Ascending aorta (tissue), 2 donors: ENCODE measurements at regions of chr1 and their contacts with region 1.

Region 1: GRCh38 chr1:208245185-208245705 is 1.1 kb upstream of the PLXNA2 start:
- DNase-seq: peak; percentile 62 to 98
- H3K4me3 ChIP-seq: peak overlapping the region; percentile 75 to 96
- H3K27ac ChIP-seq: peak overlapping the region; percentile 91 to 95
- H3K4me1 ChIP-seq: peaks cover 4 to 24% of the 10 kb centered on the region in 2 donors
- H3K27me3 ChIP-seq: no peaks in the 10 kb centered on the region
- CTCF ChIP-seq: peak; percentile 67 to 91 (median 83)

Region 2: DNA sequence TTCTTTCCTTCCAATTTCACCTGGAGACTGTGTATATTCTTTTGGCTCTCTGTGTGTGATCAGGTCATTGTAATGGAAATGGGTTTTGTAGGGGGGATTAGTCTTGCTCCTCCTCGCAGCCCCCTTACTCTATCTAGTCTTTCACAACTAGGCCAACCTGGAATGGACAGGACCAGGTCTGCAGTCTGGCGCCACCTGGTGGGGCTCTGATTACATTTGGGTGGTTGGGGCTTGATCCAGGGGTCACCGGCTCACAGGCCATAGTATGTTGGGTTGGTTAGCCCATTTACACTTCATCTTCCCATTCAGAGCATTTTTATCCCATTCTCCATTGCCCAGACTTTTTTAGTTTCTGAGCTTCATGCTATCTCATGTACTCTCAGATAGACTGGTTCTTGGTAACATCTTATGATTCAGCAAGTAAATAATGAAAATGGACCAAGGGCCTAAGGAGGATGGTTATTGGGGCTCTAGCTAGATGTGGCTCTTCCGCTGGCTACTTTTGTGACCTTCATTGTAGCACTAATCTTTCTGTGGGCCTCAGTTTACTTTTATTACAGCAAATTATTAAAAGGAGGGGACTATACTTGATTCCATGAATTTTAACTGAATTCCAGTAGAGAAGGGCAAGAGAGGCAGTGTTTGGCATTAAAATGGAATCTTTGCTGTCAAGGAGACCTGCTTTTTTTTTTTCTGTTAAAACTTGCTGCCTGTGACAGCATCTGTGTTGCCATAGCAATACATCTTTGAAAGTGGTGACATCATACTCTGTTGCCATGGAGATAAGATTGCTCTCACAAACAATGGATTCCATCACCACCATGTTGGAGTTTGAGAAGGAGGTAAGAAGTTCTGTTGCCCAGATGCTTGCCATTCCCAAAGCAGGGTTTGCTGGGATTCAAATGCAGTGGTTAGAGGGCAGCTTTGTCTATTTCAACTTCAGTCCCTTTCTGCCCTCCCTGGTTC is 151.2 kb before region 1 on chr1:
- intact Hi-C with region 1: loop called (anchors 5 kb)
- DNase-seq: peak in 1 of 2 donors; percentile 79
- H3K4me3 ChIP-seq: no peak overlapping the region
- H3K27ac ChIP-seq: peak overlapping the region in 1 of 2 donors; percentile 44
- H3K4me1 ChIP-seq: peaks cover 0 to 12% of the 10 kb centered on the region in 2 donors
- H3K27me3 ChIP-seq: no peaks in the 10 kb centered on the region
- CTCF ChIP-seq: peak; percentile 54 to 78 (median 59)

Region 3: DNA sequence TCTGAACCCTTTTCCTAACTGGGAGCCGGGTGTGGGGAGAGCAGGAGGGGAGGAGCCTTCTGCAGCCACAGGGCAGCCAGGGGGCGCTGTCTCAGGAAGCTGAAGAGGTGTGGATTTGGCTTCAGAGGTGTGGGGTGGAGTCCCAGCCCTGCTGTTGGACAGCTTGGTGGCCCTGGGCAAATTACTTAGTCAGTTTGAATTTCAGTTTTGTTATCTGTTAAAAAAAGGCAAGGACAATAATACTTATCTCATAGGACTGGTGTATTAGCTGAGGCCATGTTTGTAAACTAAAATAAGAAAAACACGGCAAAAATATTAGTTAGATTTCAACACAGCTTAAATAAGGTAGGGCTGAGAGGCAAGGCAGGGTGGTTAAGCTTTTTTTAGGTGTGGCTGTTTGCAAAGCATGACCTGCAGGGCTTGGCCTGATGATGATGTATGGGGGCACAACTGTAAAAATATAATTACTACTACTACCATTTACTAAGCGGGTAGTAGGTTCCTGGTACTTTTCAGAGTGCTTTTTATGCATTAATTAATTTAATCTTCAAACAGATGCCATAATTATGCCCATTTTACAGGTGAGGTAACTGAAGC is 112.9 kb before region 1 on chr1:
- intact Hi-C with region 1: loop called (anchors 2 kb)
- DNase-seq: peak in 1 of 2 donors; percentile 78
- H3K4me3 ChIP-seq: no peak overlapping the region
- H3K27ac ChIP-seq: no peak overlapping the region
- H3K4me1 ChIP-seq: peaks cover 2 to 17% of the 10 kb centered on the region in 2 donors
- H3K27me3 ChIP-seq: no peaks in the 10 kb centered on the region
- CTCF ChIP-seq: peak; percentile 65 to 75 (median 67)